Activated B cell treated with CpG ODN at 0.5 μM for 24 hours (primary cell): ENCODE measurements at regions of chr3 and their contacts with region 1.

Region 1: GRCh38 chr3:113947372-113948014 is at the start of gene ZDHHC23:
- DNase-seq: peak; percentile 87
- ATAC-seq: peak; percentile 83
- H3K4me3 Mint-ChIP-seq: peak within 1 kb of the TSS; percentile 86
- H3K27ac Mint-ChIP-seq: peak within 1 kb of the TSS; percentile 84
- H3K4me1 Mint-ChIP-seq: peaks cover 18% of the 10 kb centered on the region
- H3K27me3 Mint-ChIP-seq: no peaks in the 10 kb centered on the region
- CTCF ChIP-seq: no peak
- total RNA-seq, gene ZDHHC23: 22.7 and 27.4 TPM in 2 replicates

Region 2: DNA sequence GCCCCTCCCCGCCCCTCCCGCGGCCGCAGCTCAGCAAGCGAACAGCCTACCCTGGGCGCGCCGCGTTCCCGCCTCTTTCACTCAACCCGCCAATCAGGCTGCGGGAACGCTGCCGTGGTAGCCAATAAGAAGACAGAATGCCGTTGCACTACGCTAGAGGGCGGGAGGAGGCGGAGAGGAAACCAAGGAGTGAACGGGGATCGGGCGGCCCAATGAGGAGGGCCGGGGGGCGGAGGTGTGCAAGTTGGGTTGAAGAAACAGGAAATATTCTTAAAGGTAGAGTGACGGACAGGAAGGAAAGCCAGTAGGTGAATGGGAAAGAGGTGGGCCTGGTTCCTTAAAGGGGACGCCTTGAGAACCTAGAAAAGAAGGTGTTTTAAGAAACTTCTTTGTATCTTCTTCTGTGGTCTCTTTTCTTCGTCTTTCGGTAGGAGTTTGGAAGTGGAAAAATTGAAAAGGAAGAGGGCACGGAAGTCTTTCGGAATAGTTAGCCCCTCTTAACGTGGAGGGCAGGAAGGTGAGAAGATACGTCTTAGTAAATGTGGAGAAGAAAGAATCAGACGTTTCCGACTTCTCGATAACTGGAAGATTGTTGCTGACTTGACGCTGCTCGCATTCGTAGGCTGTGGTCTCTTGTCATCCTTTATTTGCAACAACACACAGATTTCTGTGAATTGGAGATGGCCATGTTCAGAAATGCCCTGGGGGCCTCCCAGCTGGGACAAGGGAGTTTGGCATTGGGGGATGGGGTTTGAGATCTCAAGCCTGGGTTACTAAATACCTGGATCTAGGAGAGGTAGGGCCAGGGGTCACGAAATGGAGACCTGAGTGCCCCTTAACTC is 250.6 kb before region 1 on chr3:
- CTCF ChIA-PET with region 1: no interaction called
- POLR2A ChIA-PET with region 1: no interaction called
- intact Hi-C with region 1: loop called (anchors 1 kb)
- DNase-seq: peak; percentile 95
- ATAC-seq: peak; percentile 89
- H3K4me3 Mint-ChIP-seq: no peak overlapping the region
- H3K27ac Mint-ChIP-seq: no peak overlapping the region
- H3K4me1 Mint-ChIP-seq: peaks cover 29% of the 10 kb centered on the region
- H3K27me3 Mint-ChIP-seq: no peaks in the 10 kb centered on the region
- CTCF ChIP-seq: no peak

Region 3: GRCh38 chr3:113985541-113985940 is 38.0 kb after region 1 on chr3:
- CTCF ChIA-PET with region 1: no interaction called
- POLR2A ChIA-PET with region 1: no interaction called
- intact Hi-C with region 1: loop called (anchors 2 kb)
- DNase-seq: no peak
- ATAC-seq: peak; percentile 89
- H3K4me3 Mint-ChIP-seq: peak overlapping the region; percentile 56
- H3K27ac Mint-ChIP-seq: peak overlapping the region; percentile 88
- H3K4me1 Mint-ChIP-seq: peaks cover 57% of the 10 kb centered on the region
- H3K27me3 Mint-ChIP-seq: no peaks in the 10 kb centered on the region
- CTCF ChIP-seq: no peak

Region 4: DNA sequence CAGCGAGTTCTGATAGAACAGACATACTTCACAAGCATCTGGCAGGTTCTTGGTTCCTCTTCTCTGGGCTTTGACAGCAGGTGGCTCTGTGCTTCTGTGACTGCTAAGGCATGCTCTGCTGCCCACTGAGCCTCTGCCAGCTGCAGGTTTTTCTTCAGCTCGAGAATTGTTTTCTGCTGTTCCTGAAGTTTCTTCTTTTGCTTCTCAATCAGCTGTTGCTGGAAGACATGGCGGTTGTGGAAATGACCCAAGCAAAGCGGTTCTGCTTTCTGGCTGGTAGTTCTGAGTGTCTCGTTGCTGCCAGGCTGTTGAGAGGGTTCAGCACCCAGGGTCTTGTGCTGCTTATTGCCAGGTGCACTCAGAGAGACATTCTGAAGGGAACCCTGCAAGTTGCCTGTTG is 58.0 kb after region 1 on chr3:
- CTCF ChIA-PET with region 1: no interaction called
- POLR2A ChIA-PET with region 1: no interaction called
- intact Hi-C with region 1: loop called (anchors 2 kb)
- DNase-seq: peak; percentile 52
- ATAC-seq: peak; percentile 95
- H3K4me3 Mint-ChIP-seq: peak overlapping the region; percentile 76
- H3K27ac Mint-ChIP-seq: peak overlapping the region; percentile 97
- H3K4me1 Mint-ChIP-seq: peaks cover 61% of the 10 kb centered on the region
- H3K27me3 Mint-ChIP-seq: no peaks in the 10 kb centered on the region
- CTCF ChIP-seq: no peak

Region 5: DNA sequence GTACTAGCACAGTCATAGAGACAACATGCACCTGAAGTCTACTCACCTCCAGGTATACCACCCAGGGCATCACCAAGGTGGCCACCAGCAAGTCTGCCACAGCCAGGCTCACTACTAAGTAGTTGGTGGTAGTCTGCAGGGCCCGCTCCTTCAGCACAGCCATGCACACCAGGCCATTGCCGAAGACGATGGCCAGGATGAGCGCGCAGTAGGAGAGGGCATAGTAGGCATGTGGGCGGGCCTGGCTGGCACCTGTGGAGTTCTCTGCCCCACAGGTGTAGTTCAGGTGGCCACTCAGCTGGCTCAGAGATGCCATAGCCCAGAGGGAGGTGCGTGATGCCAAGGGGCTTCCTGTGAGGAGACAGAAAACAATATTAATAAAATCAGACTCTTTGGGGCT is 224.2 kb after region 1 on chr3:
- CTCF ChIA-PET with region 1: no interaction called
- POLR2A ChIA-PET with region 1: no interaction called
- intact Hi-C with region 1: no loop called
- DNase-seq: no peak
- ATAC-seq: no peak
- H3K4me3 Mint-ChIP-seq: no peak overlapping the region
- H3K27ac Mint-ChIP-seq: no peak overlapping the region
- H3K4me1 Mint-ChIP-seq: no peaks in the 10 kb centered on the region
- H3K27me3 Mint-ChIP-seq: peaks cover 2% of the 10 kb centered on the region
- CTCF ChIP-seq: no peak

Region 6: DNA sequence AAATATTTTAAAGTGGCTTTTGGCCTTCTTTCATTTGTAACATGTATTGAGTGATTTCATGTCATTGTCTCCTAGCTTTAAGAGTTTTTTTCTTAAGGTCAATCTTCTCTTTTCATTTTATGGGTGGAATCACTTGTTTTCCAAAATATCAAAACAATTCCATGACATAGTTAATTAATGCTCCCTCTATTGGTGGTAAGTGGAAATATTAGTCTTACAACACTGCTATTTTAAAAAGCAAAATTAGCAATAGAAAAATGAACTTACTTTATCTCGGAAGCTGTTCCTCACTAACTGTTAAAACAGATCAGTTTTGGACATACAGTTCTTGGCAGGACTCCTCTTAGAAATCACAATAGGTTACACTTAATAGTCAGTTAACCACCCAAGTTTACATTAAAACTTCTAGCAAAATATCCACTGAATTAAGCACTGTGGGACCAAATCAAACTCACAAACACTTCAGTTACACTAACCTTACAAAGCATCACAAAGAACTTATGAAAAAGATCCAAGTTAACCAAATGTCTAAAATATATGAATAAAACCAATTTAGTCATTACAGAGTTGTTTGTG is 388.7 kb after region 1 on chr3:
- CTCF ChIA-PET with region 1: no interaction called
- POLR2A ChIA-PET with region 1: no interaction called
- intact Hi-C with region 1: no loop called
- DNase-seq: no peak
- ATAC-seq: no peak
- H3K4me3 Mint-ChIP-seq: no peak overlapping the region
- H3K27ac Mint-ChIP-seq: peak overlapping the region; percentile 59
- H3K4me1 Mint-ChIP-seq: peaks cover 43% of the 10 kb centered on the region
- H3K27me3 Mint-ChIP-seq: no peaks in the 10 kb centered on the region
- CTCF ChIP-seq: no peak